Heart left ventricle (tissue), 16 donors: ENCODE measurements at regions of chr4 and their contacts with region 1.

Region 1: DNA sequence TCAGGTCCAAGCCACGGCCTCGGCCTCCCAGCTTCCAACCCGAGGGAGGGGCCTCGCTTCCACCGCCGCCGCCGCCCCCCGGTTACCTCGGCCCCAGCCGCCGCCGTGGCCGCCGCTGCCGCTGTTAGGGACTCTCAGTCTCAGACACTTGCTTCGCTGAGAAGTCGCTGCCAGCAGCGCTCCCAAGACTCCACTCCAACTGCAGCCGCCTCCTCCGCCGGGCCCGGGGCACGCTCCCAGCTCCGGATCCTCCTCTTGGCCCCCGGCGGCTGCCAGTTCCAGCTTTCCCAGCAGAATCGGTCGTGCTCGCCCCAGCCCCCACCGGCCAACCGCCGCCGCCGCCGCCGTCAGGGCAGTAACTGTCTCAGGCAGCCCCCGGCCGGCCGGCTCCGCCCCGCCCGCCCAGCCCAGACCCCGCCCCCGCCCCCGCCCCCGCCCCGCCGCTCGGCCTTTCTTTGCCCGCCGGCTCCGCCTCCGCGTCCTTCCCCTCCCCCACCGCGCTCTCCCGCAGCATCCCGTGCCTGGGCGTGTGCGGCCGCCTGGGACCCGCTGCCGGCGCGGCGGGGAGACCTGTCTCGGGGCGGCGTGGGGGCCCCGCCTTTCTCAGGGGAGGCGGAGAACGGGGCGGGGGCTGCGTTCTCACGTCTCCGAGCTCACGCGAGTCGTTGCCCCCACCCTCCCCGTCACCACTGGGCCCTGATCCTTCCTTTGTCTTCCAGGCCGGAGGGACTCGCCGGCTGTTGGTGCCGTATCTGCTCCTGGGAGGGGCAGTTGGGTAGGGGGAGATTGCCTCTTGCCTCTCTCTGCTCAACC is at the start of gene ANKRD50:
- DNase-seq: peak; percentile 90 to 95 (median 93)
- ATAC-seq: peak; percentile 82 to 94 (median 90)
- H3K4me3 ChIP-seq: peak within 1 kb of the TSS; percentile 66 to 92 (median 88)
- H3K27ac ChIP-seq: peak within 1 kb of the TSS; percentile 85 to 98 (median 96)
- H3K4me1 ChIP-seq: peaks cover 0 to 39% (median 22%) of the 10 kb centered on the region in 12 donors
- H3K27me3 ChIP-seq: no peaks in the 10 kb centered on the region
- CTCF ChIP-seq: no peak
- POLR2A ChIP-seq: peak in 1 of 2 donors; percentile 64
- total RNA-seq, gene ANKRD50: 5.5 to 19.0 (median 11.5) TPM

Region 2: DNA sequence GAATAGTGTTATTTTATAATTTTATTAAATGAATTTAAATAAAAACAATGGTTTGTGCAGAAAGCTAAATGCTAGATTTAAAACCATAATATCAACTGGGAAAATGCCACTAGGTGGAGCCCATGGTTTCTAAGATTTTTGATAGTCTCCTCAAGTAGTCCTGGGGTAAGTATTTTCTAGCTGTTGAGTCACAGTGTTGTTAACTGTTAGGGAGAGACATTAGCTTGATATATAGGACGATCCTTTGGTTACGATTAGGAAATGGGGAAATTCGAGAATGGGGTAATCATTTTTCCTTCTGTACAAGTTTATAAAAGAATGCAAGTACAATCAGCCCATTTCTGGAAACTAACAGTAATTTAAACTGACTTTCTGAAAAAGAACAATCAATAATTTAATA is 378.5 kb before region 1 on chr4:
- intact Hi-C with region 1: loop called in 6 of 10 experiments (anchors 2 to 10 kb)
- DNase-seq: peak in 1 of 5 donors; percentile 26
- ATAC-seq: peak in 3 of 4 donors; percentile 52 to 75 (median 69)
- H3K4me3 ChIP-seq: no peak overlapping the region
- H3K27ac ChIP-seq: no peak overlapping the region
- H3K4me1 ChIP-seq: no peaks in the 10 kb centered on the region
- H3K27me3 ChIP-seq: no peaks in the 10 kb centered on the region
- CTCF ChIP-seq: peak; percentile 42 to 78 (median 67)
- POLR2A ChIP-seq: no peak

Region 3: DNA sequence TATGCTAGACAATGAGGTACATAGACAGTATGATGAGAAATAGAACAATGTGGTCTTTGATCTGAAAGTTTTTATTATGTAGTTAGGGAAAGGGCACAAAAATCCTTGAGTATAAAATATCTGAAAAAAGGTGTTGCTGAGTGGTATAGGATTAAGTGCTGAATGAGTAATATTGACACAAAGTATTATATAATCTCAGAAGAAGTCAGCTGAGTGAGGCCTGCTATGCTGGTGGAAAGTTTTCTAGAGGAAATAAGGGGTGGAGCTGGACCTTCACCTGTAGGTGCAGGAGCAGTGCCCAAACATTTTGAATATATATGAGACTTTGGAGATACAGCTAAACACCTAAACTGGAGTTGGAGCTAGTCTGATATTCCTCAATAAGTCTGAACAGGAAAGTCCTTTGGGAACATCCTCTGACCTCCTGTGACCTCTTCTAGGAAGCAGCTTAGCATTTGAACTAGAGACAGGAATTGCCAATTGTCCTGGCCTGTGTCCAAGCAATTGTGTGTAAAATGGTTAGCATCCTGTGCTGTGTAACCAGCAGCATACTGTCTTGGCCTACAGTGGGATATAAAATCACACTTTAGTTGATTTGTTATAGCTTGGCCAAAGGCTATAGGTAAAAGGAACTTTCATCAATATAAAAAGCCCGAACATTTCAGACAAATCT is 285.3 kb before region 1 on chr4:
- intact Hi-C with region 1: loop called in 1 of 10 experiments (anchors 10 kb)
- DNase-seq: peak in 4 of 5 donors; percentile 42 to 80 (median 70)
- ATAC-seq: peak; percentile 65 to 91 (median 74)
- H3K4me3 ChIP-seq: no peak overlapping the region
- H3K27ac ChIP-seq: peak overlapping the region in 5 of 12 donors; percentile 4 to 51 (median 26)
- H3K4me1 ChIP-seq: peaks cover 0 to 28% (median 5%) of the 10 kb centered on the region in 12 donors
- H3K27me3 ChIP-seq: no peaks in the 10 kb centered on the region
- CTCF ChIP-seq: no peak
- POLR2A ChIP-seq: no peak

Region 4: GRCh38 chr4:124631760-124632159 is 80.8 kb before region 1 on chr4:
- intact Hi-C with region 1: loop called in 1 of 10 experiments (anchors 10 kb)
- DNase-seq: peak in 3 of 5 donors; percentile 56 to 73 (median 70)
- ATAC-seq: peak; percentile 67 to 97 (median 91)
- H3K4me3 ChIP-seq: no peak overlapping the region
- H3K27ac ChIP-seq: peak overlapping the region in 1 of 12 donors; percentile 27
- H3K4me1 ChIP-seq: peaks cover 0 to 7% (median 0%) of the 10 kb centered on the region in 12 donors
- H3K27me3 ChIP-seq: no peaks in the 10 kb centered on the region
- CTCF ChIP-seq: no peak
- POLR2A ChIP-seq: no peak

Region 5: DNA sequence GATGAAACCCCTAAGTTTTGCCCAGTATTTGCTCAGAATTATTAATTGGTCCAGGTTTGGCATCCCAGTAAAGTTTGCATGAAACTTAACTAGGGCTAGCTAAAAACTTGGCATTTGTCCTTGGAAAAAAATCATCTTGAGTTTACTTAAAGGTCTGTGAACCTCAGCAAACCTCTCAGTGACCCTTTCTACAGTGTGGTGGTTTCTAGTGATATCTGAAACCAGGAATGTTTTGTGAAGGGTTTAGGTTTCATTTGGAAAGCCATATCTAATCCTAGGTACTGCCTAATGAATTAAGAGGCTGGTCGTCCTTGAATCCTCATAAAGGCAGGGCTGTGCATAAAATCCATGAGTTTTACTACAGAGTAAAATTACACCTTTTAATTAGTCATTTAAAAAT is 218.5 kb after region 1 on chr4:
- intact Hi-C with region 1: loop called in 4 of 10 experiments (anchors 5 to 10 kb)
- DNase-seq: no peak
- ATAC-seq: no peak
- H3K4me3 ChIP-seq: no peak overlapping the region
- H3K27ac ChIP-seq: no peak overlapping the region
- H3K4me1 ChIP-seq: peaks cover 0 to 12% (median 2%) of the 10 kb centered on the region in 12 donors
- H3K27me3 ChIP-seq: no peaks in the 10 kb centered on the region
- CTCF ChIP-seq: no peak
- POLR2A ChIP-seq: no peak

Region 6: GRCh38 chr4:124940387-124940786 is 227.8 kb after region 1 on chr4:
- intact Hi-C with region 1: loop called in 4 of 10 experiments (anchors 5 to 10 kb)
- DNase-seq: no peak
- ATAC-seq: peak; percentile 23 to 76 (median 48)
- H3K4me3 ChIP-seq: no peak overlapping the region
- H3K27ac ChIP-seq: peak overlapping the region in 9 of 12 donors; percentile 8 to 61 (median 45)
- H3K4me1 ChIP-seq: peaks cover 2 to 43% (median 22%) of the 10 kb centered on the region in 12 donors
- H3K27me3 ChIP-seq: no peaks in the 10 kb centered on the region
- CTCF ChIP-seq: no peak
- POLR2A ChIP-seq: no peak

Region 7: DNA sequence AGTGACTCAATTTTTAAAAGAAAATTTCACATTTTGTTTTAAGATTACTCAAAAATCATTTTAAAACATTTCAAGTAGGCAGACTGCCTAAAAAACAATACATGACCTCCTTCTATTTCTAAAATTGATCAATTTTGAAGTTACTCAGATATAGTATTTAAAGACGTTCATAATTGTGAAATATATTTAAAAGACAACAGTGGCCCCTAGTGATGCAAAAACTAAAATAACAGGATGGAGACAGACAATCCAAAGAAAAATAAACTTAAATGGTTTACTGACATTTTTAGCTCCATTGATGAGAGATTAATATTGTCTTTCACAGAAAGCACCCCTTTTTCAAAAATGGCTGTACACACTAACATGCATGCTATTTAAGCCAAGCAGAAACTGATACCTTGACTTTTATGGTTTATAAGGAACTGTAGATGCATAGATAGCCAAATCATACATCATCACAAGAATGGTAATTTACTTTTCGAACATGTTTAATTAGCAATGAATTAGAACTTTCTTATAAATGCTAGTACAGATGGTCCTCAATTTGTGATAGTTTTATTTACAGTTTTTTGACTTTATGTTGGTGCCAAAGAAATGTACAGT is 532.4 kb after region 1 on chr4:
- intact Hi-C with region 1: loop called in 1 of 10 experiments (anchors 10 kb)
- DNase-seq: no peak
- ATAC-seq: no peak
- H3K4me3 ChIP-seq: no peak overlapping the region
- H3K27ac ChIP-seq: no peak overlapping the region
- H3K4me1 ChIP-seq: no peaks in the 10 kb centered on the region
- H3K27me3 ChIP-seq: no peaks in the 10 kb centered on the region
- CTCF ChIP-seq: peak in 10 of 12 donors; percentile 28 to 63 (median 56)
- POLR2A ChIP-seq: no peak